ENCODE measurements at regions of chr14 and their contacts with region 1.

Region 1: GRCh38 chr14:71320107-71320733 is 413.0 kb downstream of the PCNX1 start:
- DNase-seq: peak; percentile 97
- H3K4me3 Mint-ChIP-seq: peak within 1 kb of the TSS; percentile 99
- H3K27ac Mint-ChIP-seq: peak within 1 kb of the TSS; percentile 91
- H3K4me1 Mint-ChIP-seq: peaks cover 27% of the 10 kb centered on the region
- H3K27me3 Mint-ChIP-seq: no peaks in the 10 kb centered on the region
- CTCF ChIP-seq: no peak

Region 2: DNA sequence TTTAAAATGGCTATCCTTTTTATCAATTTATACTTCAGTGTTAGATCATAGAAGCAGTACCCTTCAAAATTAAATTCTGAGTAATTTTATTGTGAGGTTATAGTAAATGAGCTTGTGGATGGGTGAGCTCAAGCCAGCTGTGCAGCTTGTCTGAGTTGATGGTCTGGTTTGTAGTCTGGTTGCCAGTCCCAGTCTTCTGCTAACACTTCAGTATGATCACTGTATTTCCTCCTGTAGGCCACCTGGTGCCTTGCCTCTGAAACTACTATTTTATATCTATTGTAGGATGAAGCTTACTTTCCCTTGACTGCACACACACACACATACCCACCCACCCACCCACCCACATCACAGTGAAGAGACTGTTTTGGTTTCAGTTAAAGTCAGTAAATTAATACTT is 83.4 kb after region 1 on chr14:
- CTCF ChIA-PET with region 1: interaction called, 4 read pairs
- intact Hi-C with region 1: loop called (anchors 1 kb)
- DNase-seq: peak; percentile 29
- H3K4me3 Mint-ChIP-seq: no peak overlapping the region
- H3K27ac Mint-ChIP-seq: no peak overlapping the region
- H3K4me1 Mint-ChIP-seq: no peaks in the 10 kb centered on the region
- H3K27me3 Mint-ChIP-seq: no peaks in the 10 kb centered on the region
- CTCF ChIP-seq: no peak

Region 3: DNA sequence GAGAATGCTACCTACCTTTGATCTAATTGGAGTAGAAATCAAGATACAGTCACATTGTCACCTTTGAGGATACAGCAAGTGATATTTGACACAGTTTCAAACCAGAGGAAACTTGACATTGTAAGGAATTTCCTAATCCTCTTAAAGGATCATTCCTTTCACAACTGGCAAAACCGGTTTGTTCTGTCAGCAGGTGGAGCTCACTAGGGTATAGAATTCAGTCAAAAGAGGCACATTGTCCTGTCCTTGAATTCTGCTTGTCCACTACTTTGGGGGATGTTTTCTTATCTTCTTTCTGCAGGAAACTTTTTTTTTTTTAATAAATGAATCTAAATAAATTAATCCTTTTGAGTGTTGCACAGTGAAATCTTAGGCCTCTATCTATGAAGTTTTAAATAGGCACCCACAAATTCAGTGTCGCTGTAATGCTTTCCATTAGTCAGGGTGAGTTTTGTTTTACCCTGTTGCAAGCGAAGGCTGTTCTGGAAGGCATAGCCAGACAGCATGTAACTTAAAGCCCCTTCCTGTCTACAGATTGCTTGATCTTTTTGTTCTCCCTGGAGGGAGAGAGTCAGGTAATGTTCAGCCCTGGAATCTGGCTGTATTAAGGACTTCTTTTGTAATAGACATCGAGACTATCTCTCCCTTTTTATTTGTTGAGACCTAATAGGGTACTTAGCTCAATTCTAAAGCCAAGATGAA is 327.0 kb after region 1 on chr14:
- CTCF ChIA-PET with region 1: no interaction called
- intact Hi-C with region 1: loop called (anchors 5 kb)
- DNase-seq: peak; percentile 60
- H3K4me3 Mint-ChIP-seq: no peak overlapping the region
- H3K27ac Mint-ChIP-seq: peak overlapping the region; percentile 34
- H3K4me1 Mint-ChIP-seq: peaks cover 36% of the 10 kb centered on the region
- H3K27me3 Mint-ChIP-seq: no peaks in the 10 kb centered on the region
- CTCF ChIP-seq: no peak

Region 4: GRCh38 chr14:71753126-71753830 is 433.1 kb after region 1 on chr14:
- CTCF ChIA-PET with region 1: no interaction called
- intact Hi-C with region 1: loop called (anchors 2 kb)
- DNase-seq: peak; percentile 84
- H3K4me3 Mint-ChIP-seq: peak overlapping the region; percentile 26
- H3K27ac Mint-ChIP-seq: no peak overlapping the region
- H3K4me1 Mint-ChIP-seq: peaks cover 9% of the 10 kb centered on the region
- H3K27me3 Mint-ChIP-seq: no peaks in the 10 kb centered on the region
- CTCF ChIP-seq: peak; percentile 88

Measured in Calu3 (cell line).